H1 (cell line): ENCODE measurements at regions of chr12 and their contacts with region 1.

Region 1: DNA sequence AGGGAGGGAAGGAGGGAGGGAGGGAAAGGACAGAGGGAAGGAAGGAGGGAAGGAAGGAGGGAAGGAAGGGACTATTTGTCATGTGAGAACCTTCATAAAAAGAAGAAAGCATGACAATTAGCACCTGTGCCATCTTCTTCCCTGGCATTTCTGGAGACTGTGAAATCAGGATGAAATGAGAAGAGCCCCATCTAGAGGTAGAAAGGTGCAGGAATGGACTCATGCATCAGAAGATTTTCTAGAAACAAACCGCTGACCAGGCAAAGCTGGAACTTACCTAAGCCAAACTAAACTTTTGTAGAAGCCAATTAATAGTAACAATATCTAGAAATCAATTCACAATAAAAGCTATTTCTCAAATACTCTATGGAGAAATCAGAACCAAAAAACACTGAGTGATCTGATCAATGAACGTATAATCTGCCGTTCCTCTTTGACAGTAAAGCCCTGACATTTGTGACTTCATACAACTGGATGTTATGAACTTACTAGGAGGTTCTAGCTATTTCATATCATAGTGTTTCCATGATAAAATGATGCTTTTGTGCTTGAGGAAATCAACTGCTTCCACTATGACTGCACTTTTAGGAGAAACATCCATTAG is 24.4 kb upstream of the CRACR2A start:
- DNase-seq: no peak
- H3K4me3 ChIP-seq: no peak overlapping the region
- H3K27ac ChIP-seq: no peak overlapping the region
- H3K4me1 ChIP-seq: peaks cover 0 to 4% (median 0%) of the 10 kb centered on the region in 4 experiments; a peak in 1 of 7 replicates
- H3K27me3 ChIP-seq: no peaks in the 10 kb centered on the region
- CTCF ChIP-seq: peak in 2 of 3 experiments; percentile 76; a peak in 3 of 4 replicates
- EP300 ChIP-seq: no peak
- POLR2A ChIP-seq: no peak
- RAD21 ChIP-seq: peak; percentile 92

Region 2: DNA sequence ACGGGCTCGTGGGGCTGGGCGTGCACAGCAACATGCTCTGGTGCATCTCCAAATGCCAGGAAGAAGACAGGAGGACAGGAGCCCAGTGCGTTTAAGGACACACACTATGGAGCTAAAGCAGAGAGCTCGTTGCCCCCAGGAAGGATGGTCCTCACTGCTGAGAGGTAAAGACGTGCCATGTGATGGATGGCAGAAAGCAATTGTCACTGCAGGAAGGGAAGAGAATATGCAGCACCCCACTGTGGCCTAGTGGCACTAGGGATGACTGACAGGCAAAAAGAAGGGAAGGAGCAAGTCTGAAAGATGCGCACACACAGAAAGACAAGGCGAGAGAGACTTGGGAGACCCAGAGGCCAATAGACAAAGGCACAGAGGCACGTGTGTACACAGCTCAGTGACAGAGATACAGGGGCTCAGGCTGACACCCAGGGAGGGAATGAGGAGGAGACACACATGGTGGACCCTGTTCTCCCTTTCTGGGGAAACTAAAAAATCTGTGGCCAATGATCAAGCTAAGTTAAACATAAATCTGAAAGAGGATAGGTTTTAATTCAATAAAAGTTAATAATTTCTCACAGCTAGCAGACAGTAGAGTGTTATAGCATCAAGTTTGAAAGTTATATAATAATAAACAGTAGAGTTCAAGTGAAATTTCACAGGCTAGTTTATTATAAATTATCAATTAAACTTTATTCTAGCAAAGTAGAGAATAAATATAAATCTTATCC is 103.2 kb before region 1 on chr12:
- CTCF ChIA-PET with region 1: interaction called, 12 read pairs
- POLR2A ChIA-PET with region 1: no interaction called
- DNase-seq: no peak
- H3K4me3 ChIP-seq: no peak overlapping the region
- H3K27ac ChIP-seq: no peak overlapping the region
- H3K4me1 ChIP-seq: no peaks in the 10 kb centered on the region
- H3K27me3 ChIP-seq: no peaks in the 10 kb centered on the region
- CTCF ChIP-seq: no peak
- EP300 ChIP-seq: no peak
- POLR2A ChIP-seq: no peak
- RAD21 ChIP-seq: no peak

Region 3: GRCh38 chr12:3761116-3761735 is 16.1 kb before region 1 on chr12:
- CTCF ChIA-PET with region 1: interaction called, 10 read pairs
- POLR2A ChIA-PET with region 1: no interaction called
- DNase-seq: no peak
- H3K4me3 ChIP-seq: no peak overlapping the region
- H3K27ac ChIP-seq: no peak overlapping the region
- H3K4me1 ChIP-seq: no peaks in the 10 kb centered on the region; a peak in 1 of 7 replicates
- H3K27me3 ChIP-seq: no peaks in the 10 kb centered on the region; a peak in 1 of 7 replicates
- CTCF ChIP-seq: no peak
- EP300 ChIP-seq: no peak
- POLR2A ChIP-seq: no peak
- RAD21 ChIP-seq: no peak

Region 4: GRCh38 chr12:3803865-3804472 is 26.7 kb after region 1 on chr12:
- CTCF ChIA-PET with region 1: interaction called, 11 read pairs
- POLR2A ChIA-PET with region 1: no interaction called
- DNase-seq: peak; percentile 38 to 79
- H3K4me3 ChIP-seq: no peak overlapping the region
- H3K27ac ChIP-seq: no peak overlapping the region
- H3K4me1 ChIP-seq: no peaks in the 10 kb centered on the region
- H3K27me3 ChIP-seq: no peaks in the 10 kb centered on the region
- CTCF ChIP-seq: peak; percentile 78 to 91 (median 90)
- EP300 ChIP-seq: no peak
- POLR2A ChIP-seq: no peak
- RAD21 ChIP-seq: peak; percentile 91 to 94

Region 5: DNA sequence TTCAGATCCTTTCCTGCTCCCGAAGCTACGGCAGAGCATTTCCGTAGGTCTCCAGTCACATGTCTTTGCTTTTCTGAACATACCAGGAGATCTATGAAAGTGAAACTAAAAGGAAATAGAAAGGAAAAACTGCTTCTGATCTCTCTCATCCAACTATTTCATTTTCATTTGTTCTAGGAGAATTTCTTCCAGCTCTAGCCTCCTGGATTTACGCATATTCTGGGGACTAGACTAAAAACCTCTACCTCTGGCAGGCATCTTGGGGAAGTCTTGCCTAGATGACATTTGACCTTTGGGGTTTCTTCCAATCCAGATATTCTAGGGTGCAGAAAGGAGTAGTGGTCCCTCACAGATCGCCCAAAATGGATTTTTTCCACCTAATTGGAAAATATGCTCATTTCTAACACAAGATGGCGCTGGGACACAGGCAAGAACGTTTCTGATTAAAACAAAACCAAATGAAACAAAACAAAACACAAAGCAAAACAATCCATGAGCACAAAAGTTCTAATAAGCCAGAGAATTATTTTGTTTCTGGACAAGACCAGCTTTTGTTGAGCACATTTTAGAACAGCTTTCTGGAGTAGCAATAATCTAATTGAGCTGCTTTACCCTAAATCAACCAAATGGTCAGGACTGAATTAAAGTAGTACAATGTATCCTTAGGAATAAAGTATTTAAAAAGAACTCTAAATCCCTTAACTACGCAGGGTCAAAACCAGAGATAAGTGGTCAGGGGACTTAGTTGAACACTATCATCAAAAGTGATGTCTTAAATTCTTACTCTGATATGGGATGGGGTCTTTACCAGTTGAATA is 108.2 kb after region 1 on chr12:
- CTCF ChIA-PET with region 1: no interaction called
- POLR2A ChIA-PET with region 1: no interaction called
- DNase-seq: no peak
- H3K4me3 ChIP-seq: no peak overlapping the region
- H3K27ac ChIP-seq: no peak overlapping the region
- H3K4me1 ChIP-seq: peaks cover 0 to 2% (median under 1%) of the 10 kb centered on the region in 4 experiments; a peak in 5 of 7 replicates
- H3K27me3 ChIP-seq: no peaks in the 10 kb centered on the region; a peak in 1 of 7 replicates
- CTCF ChIP-seq: peak in 2 of 3 experiments; percentile 67 to 70; a peak in 3 of 4 replicates
- EP300 ChIP-seq: no peak
- POLR2A ChIP-seq: no peak
- RAD21 ChIP-seq: peak; percentile 93